ENCODE measurements at regions of chr14 and their contacts with region 1.

Region 1: DNA sequence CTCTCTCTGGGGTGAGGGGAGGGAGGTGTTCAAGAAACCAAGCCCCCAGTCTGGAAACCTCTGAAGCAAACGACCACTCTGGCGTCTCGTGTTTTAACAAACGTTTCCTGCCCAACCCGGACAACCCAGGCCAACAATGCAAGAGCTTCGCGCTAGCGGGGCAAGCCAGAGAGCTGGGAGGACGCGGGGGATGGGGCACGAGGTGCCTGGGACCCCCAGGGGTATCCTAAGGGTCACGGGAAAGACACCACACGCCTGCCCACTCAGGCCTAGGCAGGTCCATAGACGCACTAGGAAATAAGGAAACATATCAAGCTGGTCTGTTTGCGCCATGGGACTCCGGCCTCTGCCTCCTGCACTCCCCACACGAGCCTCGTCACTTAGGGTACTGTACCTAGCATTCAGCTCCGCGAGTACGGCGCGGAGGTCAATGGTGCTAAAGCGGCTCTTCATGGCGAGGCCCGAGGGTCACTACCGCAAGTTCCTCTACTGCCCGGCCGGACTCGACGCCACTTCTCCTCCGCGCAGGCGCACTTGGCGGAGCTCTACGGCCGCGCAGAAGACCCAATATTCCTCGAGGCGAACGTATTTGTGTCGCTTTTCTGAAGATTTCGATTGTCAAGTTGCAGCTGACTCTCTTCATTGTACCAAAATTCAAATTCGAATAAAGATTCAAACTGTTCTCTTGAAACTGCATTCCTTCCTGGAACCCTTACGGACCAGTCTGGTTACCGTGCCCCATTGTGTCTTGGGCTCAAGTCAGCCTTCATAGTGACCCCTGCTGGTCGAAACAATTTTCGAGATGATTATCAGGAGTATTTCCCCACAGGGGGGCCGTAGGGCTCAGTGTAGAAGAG is at the start of gene NEMF:
- DNase-seq: peak; percentile 67 to 81 (median 78)
- ATAC-seq: peak; percentile 90
- H3K4me3 ChIP-seq: peak within 1 kb of the TSS; percentile 86
- H3K4me3 Mint-ChIP-seq: peak within 1 kb of the TSS; percentile 93 to 100 (median 96)
- H3K27ac ChIP-seq: peak within 1 kb of the TSS; percentile 87
- H3K27ac Mint-ChIP-seq: peak within 1 kb of the TSS; percentile 94 to 99 (median 97)
- H3K4me1 ChIP-seq: peaks cover 17 to 31% of the 10 kb centered on the region in 2 donors
- H3K4me1 Mint-ChIP-seq: peaks cover 26 to 49% (median 43%) of the 10 kb centered on the region in 7 donors
- H3K27me3 ChIP-seq: no peaks in the 10 kb centered on the region
- H3K27me3 Mint-ChIP-seq: no peaks in the 10 kb centered on the region
- total RNA-seq, gene NEMF: 88.6 to 127 (median 105) TPM

Region 2: GRCh38 chr14:49461529-49462401 is 390.8 kb before region 1 on chr14:
- CTCF ChIA-PET with region 1: interaction called, 4 read pairs
- POLR2A ChIA-PET with region 1: no interaction called
- intact Hi-C with region 1: loop called in 1 of 2 experiments (anchors 2 kb)
- DNase-seq: peak in 7 of 9 donors; percentile 43 to 74 (median 67)
- ATAC-seq: peak; percentile 95
- H3K4me3 ChIP-seq: no peak overlapping the region
- H3K4me3 Mint-ChIP-seq: no peak overlapping the region
- H3K27ac ChIP-seq: no peak overlapping the region
- H3K27ac Mint-ChIP-seq: no peak overlapping the region
- H3K4me1 ChIP-seq: no peaks in the 10 kb centered on the region
- H3K4me1 Mint-ChIP-seq: no peaks in the 10 kb centered on the region
- H3K27me3 ChIP-seq: no peaks in the 10 kb centered on the region
- H3K27me3 Mint-ChIP-seq: peaks cover 0 to 31% (median 6%) of the 10 kb centered on the region in 5 donors

Region 3: GRCh38 chr14:49633640-49634546 is 218.6 kb before region 1 on chr14:
- CTCF ChIA-PET with region 1: interaction called, 7 read pairs
- POLR2A ChIA-PET with region 1: interaction called, 10 read pairs
- intact Hi-C with region 1: loop called (anchors 1 to 2 kb)
- DNase-seq: peak; percentile 89 to 96 (median 93)
- ATAC-seq: peak; percentile 92
- H3K4me3 ChIP-seq: peak overlapping the region; percentile 99
- H3K4me3 Mint-ChIP-seq: peak overlapping the region; percentile 81 to 99 (median 96)
- H3K27ac ChIP-seq: peak overlapping the region; percentile 96
- H3K27ac Mint-ChIP-seq: peak overlapping the region; percentile 71 to 96 (median 90)
- H3K4me1 ChIP-seq: peaks cover 19 to 29% of the 10 kb centered on the region in 2 donors
- H3K4me1 Mint-ChIP-seq: peaks cover 35 to 71% (median 52%) of the 10 kb centered on the region in 7 donors
- H3K27me3 ChIP-seq: no peaks in the 10 kb centered on the region
- H3K27me3 Mint-ChIP-seq: no peaks in the 10 kb centered on the region

Region 4: DNA sequence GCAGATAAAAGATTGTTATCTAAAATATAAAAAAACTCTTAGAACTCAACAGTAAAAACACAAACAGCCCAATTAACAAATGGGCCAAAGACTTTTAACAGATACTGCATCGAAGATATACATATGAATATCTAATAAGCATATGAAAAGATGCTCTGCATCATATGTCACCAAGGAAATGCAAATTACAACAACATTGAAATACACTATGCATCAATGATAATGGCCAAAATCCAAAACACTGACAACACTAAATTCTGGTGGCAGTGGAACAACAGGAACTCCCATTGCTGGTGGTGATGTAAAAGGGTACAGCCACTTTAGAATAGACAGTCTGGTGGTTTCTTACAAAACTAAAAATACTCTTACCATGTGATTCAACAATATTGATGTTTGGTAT is 43.7 kb before region 1 on chr14:
- CTCF ChIA-PET with region 1: interaction called, 3 read pairs
- POLR2A ChIA-PET with region 1: no interaction called
- intact Hi-C with region 1: loop called in 1 of 2 experiments (anchors 5 kb)
- DNase-seq: no peak
- ATAC-seq: no peak
- H3K4me3 ChIP-seq: no peak overlapping the region
- H3K4me3 Mint-ChIP-seq: no peak overlapping the region
- H3K27ac ChIP-seq: no peak overlapping the region
- H3K27ac Mint-ChIP-seq: peak overlapping the region in 1 of 9 donors; percentile 38
- H3K4me1 ChIP-seq: no peaks in the 10 kb centered on the region
- H3K4me1 Mint-ChIP-seq: peaks cover 0 to 14% (median 6%) of the 10 kb centered on the region in 7 donors
- H3K27me3 ChIP-seq: no peaks in the 10 kb centered on the region
- H3K27me3 Mint-ChIP-seq: no peaks in the 10 kb centered on the region

Region 5: GRCh38 chr14:49892636-49893308 is 40.2 kb after region 1 on chr14 and contains the start of gene ARF6:
- CTCF ChIA-PET with region 1: interaction called, 3 read pairs
- POLR2A ChIA-PET with region 1: interaction called, 11 read pairs
- intact Hi-C with region 1: no loop called
- DNase-seq: peak; percentile 85 to 98 (median 89)
- ATAC-seq: peak; percentile 93
- H3K4me3 ChIP-seq: peak within 1 kb of the TSS; percentile 68
- H3K4me3 Mint-ChIP-seq: peak within 1 kb of the TSS; percentile 95 to 100 (median 98)
- H3K27ac ChIP-seq: peak within 1 kb of the TSS; percentile 97
- H3K27ac Mint-ChIP-seq: peak within 1 kb of the TSS; percentile 98 to 100 (median 99)
- H3K4me1 ChIP-seq: peaks cover 10 to 18% of the 10 kb centered on the region in 2 donors
- H3K4me1 Mint-ChIP-seq: peaks cover 21 to 42% (median 40%) of the 10 kb centered on the region in 7 donors
- H3K27me3 ChIP-seq: no peaks in the 10 kb centered on the region
- H3K27me3 Mint-ChIP-seq: no peaks in the 10 kb centered on the region
- total RNA-seq, gene ARF6: 61.9 to 173 (median 77.6) TPM

Region 6: DNA sequence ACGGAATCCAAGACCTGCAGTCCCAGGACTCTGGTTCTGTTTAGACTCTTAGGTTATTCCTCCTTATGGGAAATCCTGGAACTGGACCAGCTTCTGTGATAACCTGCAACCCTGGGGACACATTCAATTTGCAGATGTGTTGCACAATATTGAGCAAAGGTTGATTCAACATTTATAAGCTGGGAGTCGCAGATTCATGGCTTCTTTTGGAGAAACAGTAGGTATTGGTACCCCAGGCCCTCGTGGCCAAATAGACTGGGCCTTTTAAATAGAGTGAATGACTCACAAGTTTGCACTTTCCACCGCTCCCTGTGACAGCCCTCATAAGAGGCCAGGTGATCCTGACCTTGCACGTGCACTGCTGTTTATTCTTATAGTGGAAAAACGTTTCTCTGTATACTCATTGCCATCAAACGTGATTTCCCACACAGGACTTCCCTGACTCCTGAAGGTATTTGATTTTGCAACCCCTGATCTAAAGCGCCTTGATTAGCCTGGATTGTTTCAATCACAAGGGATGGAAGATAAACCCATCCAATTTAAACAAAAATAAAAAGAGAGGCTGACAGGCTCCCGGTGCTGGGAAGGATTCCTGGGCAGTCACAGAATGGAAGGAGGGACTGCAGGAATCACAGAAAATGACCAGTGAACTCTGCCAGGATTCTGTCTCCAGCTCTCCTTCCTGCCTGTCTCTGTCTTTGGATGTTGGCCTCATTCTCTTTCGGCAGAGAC is 165.8 kb after region 1 on chr14:
- CTCF ChIA-PET with region 1: no interaction called
- POLR2A ChIA-PET with region 1: no interaction called
- intact Hi-C with region 1: no loop called
- DNase-seq: no peak
- ATAC-seq: no peak
- H3K4me3 ChIP-seq: no peak overlapping the region
- H3K4me3 Mint-ChIP-seq: no peak overlapping the region
- H3K27ac ChIP-seq: no peak overlapping the region
- H3K27ac Mint-ChIP-seq: no peak overlapping the region
- H3K4me1 ChIP-seq: peaks cover 4 to 5% of the 10 kb centered on the region in 2 donors
- H3K4me1 Mint-ChIP-seq: peaks cover 18 to 56% (median 41%) of the 10 kb centered on the region in 7 donors
- H3K27me3 ChIP-seq: no peaks in the 10 kb centered on the region
- H3K27me3 Mint-ChIP-seq: no peaks in the 10 kb centered on the region

Region 7: DNA sequence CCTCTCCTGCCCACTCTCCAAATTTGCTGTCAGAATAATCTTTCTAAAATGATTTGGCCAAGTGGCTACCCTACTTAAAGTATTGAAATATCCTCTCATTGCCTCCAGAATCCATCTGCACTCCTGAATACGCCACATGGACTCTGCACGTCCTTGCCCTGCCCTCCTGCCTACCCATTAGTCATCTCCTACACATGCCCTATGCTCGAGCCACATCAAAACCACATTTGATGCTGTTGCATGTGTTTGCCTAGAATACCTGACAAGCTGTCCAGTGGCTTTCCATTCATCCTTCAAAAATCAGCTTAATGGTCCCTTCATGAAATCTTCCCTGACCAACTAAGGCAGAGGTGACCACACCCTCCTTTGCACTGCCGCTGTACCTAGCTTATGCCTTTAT is 246.8 kb after region 1 on chr14:
- CTCF ChIA-PET with region 1: interaction called, 21 read pairs
- POLR2A ChIA-PET with region 1: interaction called, 18 read pairs
- intact Hi-C with region 1: no loop called
- DNase-seq: no peak
- ATAC-seq: no peak
- H3K4me3 ChIP-seq: no peak overlapping the region
- H3K4me3 Mint-ChIP-seq: peak overlapping the region in 9 of 10 donors; percentile 9 to 61 (median 38)
- H3K27ac ChIP-seq: no peak overlapping the region
- H3K27ac Mint-ChIP-seq: peak overlapping the region; percentile 13 to 87 (median 79)
- H3K4me1 ChIP-seq: peaks cover 23 to 67% of the 10 kb centered on the region in 2 donors
- H3K4me1 Mint-ChIP-seq: peaks cover 39 to 92% (median 76%) of the 10 kb centered on the region in 7 donors
- H3K27me3 ChIP-seq: no peaks in the 10 kb centered on the region
- H3K27me3 Mint-ChIP-seq: peaks cover 0 to 5% (median 0%) of the 10 kb centered on the region in 5 donors

Region 8: GRCh38 chr14:50231475-50232275 is 379.1 kb after region 1 on chr14 and contains the start of gene SOS2:
- CTCF ChIA-PET with region 1: no interaction called
- POLR2A ChIA-PET with region 1: interaction called, 5 read pairs
- intact Hi-C with region 1: loop called in 1 of 2 experiments (anchors 2 kb)
- DNase-seq: peak; percentile 71 to 84 (median 80)
- ATAC-seq: peak; percentile 92
- H3K4me3 ChIP-seq: peak within 1 kb of the TSS; percentile 89
- H3K4me3 Mint-ChIP-seq: peak within 1 kb of the TSS; percentile 80 to 97 (median 91)
- H3K27ac ChIP-seq: peak within 1 kb of the TSS; percentile 81
- H3K27ac Mint-ChIP-seq: peak within 1 kb of the TSS; percentile 90 to 96 (median 95)
- H3K4me1 ChIP-seq: peaks cover 6 to 17% of the 10 kb centered on the region in 2 donors
- H3K4me1 Mint-ChIP-seq: peaks cover 19 to 47% (median 42%) of the 10 kb centered on the region in 7 donors
- H3K27me3 ChIP-seq: no peaks in the 10 kb centered on the region
- H3K27me3 Mint-ChIP-seq: no peaks in the 10 kb centered on the region
- total RNA-seq, gene SOS2: 19.7 to 49.6 (median 38.7) TPM